ENCODE measurements at regions of chr9 and their contacts with region 1.

Region 1: GRCh38 chr9:5949103-5949699 is 58.5 kb downstream of the MLANA start:
- DNase-seq: peak; percentile 24
- H3K4me3 Mint-ChIP-seq: no peak overlapping the region
- H3K27ac Mint-ChIP-seq: no peak overlapping the region
- H3K4me1 Mint-ChIP-seq: peaks cover 19% of the 10 kb centered on the region
- H3K27me3 Mint-ChIP-seq: no peaks in the 10 kb centered on the region

Region 2: DNA sequence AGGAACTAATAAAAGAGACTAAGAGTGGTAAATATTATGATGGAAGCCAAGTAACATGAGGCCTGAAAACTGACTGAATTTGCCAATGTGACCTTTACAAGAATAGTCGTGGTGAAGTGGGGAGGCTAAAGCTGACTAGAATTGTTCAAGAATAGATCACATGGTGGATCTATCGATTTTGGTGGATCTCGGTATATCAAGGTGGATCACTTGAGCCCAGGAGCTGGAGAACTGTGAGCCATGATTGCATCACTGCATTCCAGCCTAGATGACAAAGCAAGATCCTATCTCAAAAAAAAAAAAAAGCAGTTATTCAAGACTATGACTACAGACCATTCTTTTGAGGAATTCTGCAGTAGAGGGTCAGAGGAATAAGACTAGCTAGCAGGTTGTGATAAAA is 131.3 kb before region 1 on chr9:
- CTCF ChIA-PET with region 1: no interaction called
- intact Hi-C with region 1: no loop called
- DNase-seq: no peak
- H3K4me3 Mint-ChIP-seq: no peak overlapping the region
- H3K27ac Mint-ChIP-seq: no peak overlapping the region
- H3K4me1 Mint-ChIP-seq: no peaks in the 10 kb centered on the region
- H3K27me3 Mint-ChIP-seq: no peaks in the 10 kb centered on the region

Region 3: GRCh38 chr9:5931657-5932056 is 17.5 kb before region 1 on chr9:
- CTCF ChIA-PET with region 1: no interaction called
- intact Hi-C with region 1: loop called (anchors 2 kb)
- DNase-seq: no peak
- H3K4me3 Mint-ChIP-seq: no peak overlapping the region
- H3K27ac Mint-ChIP-seq: no peak overlapping the region
- H3K4me1 Mint-ChIP-seq: peaks cover 4% of the 10 kb centered on the region
- H3K27me3 Mint-ChIP-seq: no peaks in the 10 kb centered on the region

Region 4: GRCh38 chr9:6008169-6008979 is 59.2 kb after region 1 on chr9:
- CTCF ChIA-PET with region 1: no interaction called
- intact Hi-C with region 1: loop called (anchors 2 kb)
- DNase-seq: peak; percentile 98
- H3K4me3 Mint-ChIP-seq: peak overlapping the region; percentile 76
- H3K27ac Mint-ChIP-seq: peak overlapping the region; percentile 82
- H3K4me1 Mint-ChIP-seq: peaks cover 61% of the 10 kb centered on the region
- H3K27me3 Mint-ChIP-seq: no peaks in the 10 kb centered on the region

Measured in activated naive CD4-positive, alpha-beta T cell treated with anti-CD3 and anti-CD28 coated beads for 36 hours (primary cell).